ENCODE measurements at regions of chr17 and their contacts with region 1.

Region 1: DNA sequence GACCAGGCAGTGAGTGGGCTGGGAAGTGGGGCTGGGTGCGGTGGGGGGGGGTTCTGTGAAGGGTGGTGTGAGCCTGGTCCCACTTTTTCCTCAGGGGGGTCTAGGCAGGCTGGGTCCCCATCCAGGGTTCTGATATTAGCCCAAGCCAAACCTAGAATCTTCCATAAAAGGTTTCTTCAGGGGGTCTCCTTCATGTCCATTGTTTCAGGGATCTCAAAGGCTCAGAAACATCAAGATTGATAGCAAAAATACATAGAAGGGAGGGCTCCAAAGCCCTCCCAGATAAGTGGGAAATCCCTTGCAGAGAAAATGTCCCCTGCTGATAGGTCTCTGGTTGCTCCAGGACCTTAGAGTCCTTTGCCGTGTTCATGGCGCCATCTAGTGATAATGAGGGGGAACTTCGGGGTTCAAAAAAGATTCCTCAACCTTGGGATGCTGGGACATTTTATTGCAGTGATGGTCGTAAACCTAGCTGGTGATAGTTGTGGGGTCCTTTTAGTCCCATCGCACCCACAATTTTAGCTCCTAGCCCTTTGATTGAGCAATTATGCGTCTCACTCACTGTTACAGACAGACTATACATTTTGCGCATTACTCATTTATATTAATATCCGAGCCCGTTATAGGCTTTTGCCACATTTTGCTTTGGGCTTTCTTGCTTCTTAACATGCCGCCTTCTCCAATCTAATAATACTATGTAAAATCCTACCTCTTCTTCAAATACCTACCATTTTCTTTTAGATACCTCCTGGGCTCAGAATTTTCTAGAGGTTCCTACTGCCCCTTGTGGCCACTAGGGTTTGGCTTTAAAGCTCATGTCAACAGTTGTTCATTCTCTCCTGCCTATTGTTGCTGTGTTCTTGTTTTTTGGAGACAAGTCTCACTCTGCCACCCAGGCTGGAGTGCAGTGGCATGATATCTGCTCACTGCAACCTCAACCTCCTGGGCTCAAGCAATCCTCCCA is 35.1 kb downstream of the IGF2BP1 start:
- DNase-seq: peak in 1 of 5 donors; percentile 25
- ATAC-seq: peak in 3 of 4 donors; percentile 66 to 88 (median 69)
- H3K4me3 ChIP-seq: no peak overlapping the region
- H3K27ac ChIP-seq: no peak overlapping the region
- H3K4me1 ChIP-seq: peaks cover 0 to 3% (median 0%) of the 10 kb centered on the region in 12 donors
- H3K27me3 ChIP-seq: peaks cover 0 to 34% (median 3%) of the 10 kb centered on the region in 9 donors
- CTCF ChIP-seq: peak; percentile 69 to 81 (median 74)
- POLR2A ChIP-seq: no peak

Region 2: GRCh38 chr17:48671697-48672171 is 360.5 kb before region 1 on chr17:
- intact Hi-C with region 1: loop called in 9 of 10 experiments (anchors 5 to 10 kb)
- DNase-seq: peak; percentile 65 to 84 (median 78)
- ATAC-seq: peak in 3 of 4 donors; percentile 70 to 79 (median 74)
- H3K4me3 ChIP-seq: peak overlapping the region in 10 of 12 donors; percentile 15 to 41 (median 28)
- H3K27ac ChIP-seq: no peak overlapping the region
- H3K4me1 ChIP-seq: peaks cover 0 to 11% (median 4%) of the 10 kb centered on the region in 12 donors
- H3K27me3 ChIP-seq: peaks cover 0 to 78% (median 33%) of the 10 kb centered on the region in 9 donors
- CTCF ChIP-seq: peak; percentile 79 to 92 (median 86)
- POLR2A ChIP-seq: no peak

Region 3: GRCh38 chr17:48791128-48792032 is 240.9 kb before region 1 on chr17:
- intact Hi-C with region 1: loop called in 1 of 10 experiments (anchors 10 kb)
- DNase-seq: peak; percentile 70 to 79 (median 73)
- ATAC-seq: peak; percentile 74 to 87 (median 82)
- H3K4me3 ChIP-seq: no peak overlapping the region
- H3K27ac ChIP-seq: no peak overlapping the region
- H3K4me1 ChIP-seq: peaks cover 0 to 11% (median 0%) of the 10 kb centered on the region in 12 donors
- H3K27me3 ChIP-seq: peaks cover 0 to 46% (median 3%) of the 10 kb centered on the region in 9 donors
- CTCF ChIP-seq: peak; percentile 58 to 82 (median 73)
- POLR2A ChIP-seq: no peak

Region 4: GRCh38 chr17:48816774-48817590 is 215.3 kb before region 1 on chr17 and contains the start of gene TTLL6:
- intact Hi-C with region 1: loop called in 2 of 10 experiments (anchors 5 to 10 kb)
- DNase-seq: peak; percentile 86 to 93 (median 88)
- ATAC-seq: peak; percentile 97 to 99 (median 98)
- H3K4me3 ChIP-seq: peak within 1 kb of the TSS; percentile 24 to 67 (median 52)
- H3K27ac ChIP-seq: peak within 1 kb of the TSS in 1 of 12 donors; percentile 42
- H3K4me1 ChIP-seq: peaks cover 0 to 18% (median 9%) of the 10 kb centered on the region in 12 donors
- H3K27me3 ChIP-seq: peaks cover 0 to 35% (median 0%) of the 10 kb centered on the region in 9 donors
- CTCF ChIP-seq: no peak
- POLR2A ChIP-seq: no peak
- total RNA-seq, gene TTLL6: 0.55 TPM in 1 of 9 donors, not detected in the others

Region 5: GRCh38 chr17:48892940-48893645 is 139.2 kb before region 1 on chr17:
- intact Hi-C with region 1: loop called in 4 of 10 experiments (anchors 5 to 10 kb)
- DNase-seq: peak in 1 of 5 donors; percentile 40
- ATAC-seq: peak in 2 of 4 donors; percentile 1 to 6
- H3K4me3 ChIP-seq: peak overlapping the region; percentile 56 to 97 (median 80)
- H3K27ac ChIP-seq: peak overlapping the region; percentile 75 to 95 (median 90)
- H3K4me1 ChIP-seq: peaks cover 0 to 34% (median 15%) of the 10 kb centered on the region in 12 donors
- H3K27me3 ChIP-seq: no peaks in the 10 kb centered on the region
- CTCF ChIP-seq: no peak
- POLR2A ChIP-seq: peak in 1 of 2 donors; percentile 27

Region 6: GRCh38 chr17:48944519-48945260 is 87.6 kb before region 1 on chr17 and contains the start of gene SNF8:
- intact Hi-C with region 1: loop called in 1 of 10 experiments (anchors 10 kb)
- DNase-seq: peak; percentile 89 to 95 (median 92)
- ATAC-seq: peak; percentile 94 to 99 (median 98)
- H3K4me3 ChIP-seq: peak within 1 kb of the TSS; percentile 43 to 99 (median 90)
- H3K27ac ChIP-seq: peak within 1 kb of the TSS; percentile 57 to 95 (median 86)
- H3K4me1 ChIP-seq: peaks cover 3 to 29% (median 16%) of the 10 kb centered on the region in 12 donors
- H3K27me3 ChIP-seq: peaks cover 0 to 6% (median 0%) of the 10 kb centered on the region in 9 donors
- CTCF ChIP-seq: no peak
- POLR2A ChIP-seq: peak in 1 of 2 donors; percentile 84
- total RNA-seq, gene SNF8: 66.9 to 122 (median 96.1) TPM